GM10248 (cell line): ENCODE measurements at regions of chr1 and their contacts with region 1.

Region 1: GRCh38 chr1:40774266-40774998 is 9.2 kb upstream of the KCNQ4 start:
- DNase-seq: peak; percentile 68
- CTCF ChIP-seq: peak; percentile 84

Region 2: DNA sequence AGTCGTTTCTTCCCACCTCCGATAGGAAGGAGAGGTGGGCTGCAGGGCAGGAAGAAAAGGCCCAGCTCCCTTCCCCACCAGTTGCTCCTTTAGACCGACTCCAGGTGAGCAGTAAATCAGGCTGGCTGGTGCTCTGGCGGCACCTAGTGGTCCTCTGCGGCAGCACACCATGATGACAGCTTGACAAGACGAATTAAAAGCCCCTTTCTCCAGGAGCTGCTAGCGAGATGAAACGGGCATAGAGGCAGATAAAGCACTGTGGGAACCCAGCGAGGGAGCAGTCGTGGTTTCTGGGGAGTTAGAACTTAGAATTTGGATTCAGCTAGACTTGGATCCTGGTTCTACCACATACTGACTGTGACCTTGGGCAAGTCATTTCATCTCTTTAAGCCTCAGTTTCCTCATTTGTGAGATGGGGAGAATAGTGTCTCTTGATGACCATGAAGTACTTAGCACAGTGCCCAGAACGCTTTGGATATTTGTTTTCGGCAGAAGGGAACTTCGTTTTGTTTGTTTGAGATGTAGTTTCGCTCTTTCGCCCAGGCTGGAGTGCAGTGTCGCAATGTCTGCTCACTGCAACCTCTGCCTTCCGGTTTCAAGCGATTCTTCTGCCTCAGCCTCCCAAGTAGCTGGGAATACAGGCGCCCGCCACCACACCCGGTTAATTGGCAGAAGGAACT is 435.5 kb before region 1 on chr1:
- CTCF ChIA-PET with region 1: no interaction called
- POLR2A ChIA-PET with region 1: no interaction called
- DNase-seq: peak; percentile 84
- CTCF ChIP-seq: peak; percentile 97

Region 3: DNA sequence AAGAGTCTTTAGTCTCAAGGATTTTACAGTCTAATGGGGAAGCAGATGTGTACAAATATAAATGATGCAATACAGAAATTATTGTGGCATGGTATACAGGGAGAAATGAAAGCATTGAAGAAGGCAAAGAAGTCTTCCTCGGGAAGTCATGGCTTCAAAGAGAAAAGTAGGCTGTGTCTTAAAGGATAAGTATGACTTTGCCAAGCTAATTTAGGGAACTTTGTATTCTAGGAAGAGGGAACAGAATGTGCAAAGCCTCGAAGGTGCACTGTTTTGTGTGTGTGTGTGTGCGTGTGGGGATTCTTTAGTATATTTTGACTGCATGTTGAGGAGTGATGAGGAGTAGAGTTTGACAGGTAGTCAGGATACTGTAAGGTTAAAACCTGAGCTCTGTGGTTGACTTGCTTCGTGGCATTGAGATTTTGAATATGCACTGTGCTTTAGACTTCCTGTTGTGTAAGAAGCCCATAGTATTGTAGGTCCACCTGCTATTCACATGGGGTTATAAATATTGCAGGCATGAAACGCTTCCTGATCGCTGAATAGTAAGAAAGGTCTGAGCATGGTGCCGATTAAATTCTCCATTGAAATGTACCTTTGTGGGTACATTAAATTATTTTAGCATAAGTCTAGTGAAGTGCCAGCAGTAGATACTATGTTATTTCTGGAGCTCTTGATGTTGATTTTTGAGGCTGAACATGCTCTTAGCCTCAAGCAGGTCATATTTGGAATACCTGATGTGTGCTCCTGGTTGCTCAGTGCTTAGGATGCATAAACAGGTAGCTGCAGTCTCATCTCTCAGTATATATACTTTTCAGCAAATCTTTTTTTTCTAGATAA is 392.9 kb before region 1 on chr1:
- CTCF ChIA-PET with region 1: no interaction called
- POLR2A ChIA-PET with region 1: no interaction called
- DNase-seq: no peak
- CTCF ChIP-seq: no peak

Region 4: DNA sequence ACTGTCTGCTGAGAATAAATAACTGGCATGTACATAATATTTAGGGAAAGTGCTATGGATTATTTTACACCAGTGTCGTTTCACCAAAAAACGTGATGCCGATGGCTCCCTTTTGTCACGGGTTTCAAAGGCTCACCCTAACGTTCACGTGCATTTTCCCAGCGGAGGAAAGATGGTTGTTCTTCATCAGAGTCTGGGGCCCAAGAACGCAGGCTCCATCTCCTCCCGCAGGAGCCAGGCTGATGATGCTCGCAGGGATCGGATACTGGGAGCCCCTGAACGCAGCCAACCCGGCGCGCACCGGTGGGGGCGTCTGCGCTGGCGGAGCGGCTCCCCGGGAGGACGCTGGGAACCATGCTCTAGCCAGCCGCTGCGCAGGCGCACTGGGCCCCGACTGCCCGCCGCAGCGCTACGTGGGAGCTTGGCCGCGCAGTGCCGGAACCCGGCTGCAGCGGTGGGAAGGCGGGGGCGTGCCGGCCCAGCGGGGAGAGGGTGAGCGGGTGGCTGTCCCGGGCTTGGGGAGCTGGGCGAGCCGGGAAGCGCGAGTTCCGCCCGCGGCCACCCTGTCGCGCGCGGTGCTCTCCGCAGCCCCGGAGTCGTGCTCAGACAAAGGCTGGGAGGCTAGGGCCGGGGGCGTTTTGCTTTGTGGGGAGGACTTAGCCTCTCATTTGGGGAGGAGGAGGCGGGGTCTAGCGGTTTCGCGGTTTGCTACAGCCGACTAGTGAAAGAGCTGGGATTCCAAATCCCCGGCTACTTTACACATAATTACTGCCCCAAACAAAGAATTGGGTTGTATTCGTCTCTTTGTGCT is 324.5 kb before region 1 on chr1 and contains the start of gene ZFP69B:
- CTCF ChIA-PET with region 1: no interaction called
- POLR2A ChIA-PET with region 1: no interaction called
- DNase-seq: peak; percentile 97
- CTCF ChIP-seq: peak; percentile 10

Region 5: GRCh38 chr1:40691538-40692428 is 82.6 kb before region 1 on chr1 and contains the start of gene NFYC:
- CTCF ChIA-PET with region 1: interaction called, 17 read pairs
- POLR2A ChIA-PET with region 1: no interaction called
- DNase-seq: peak; percentile 95
- CTCF ChIP-seq: no peak

Region 6: DNA sequence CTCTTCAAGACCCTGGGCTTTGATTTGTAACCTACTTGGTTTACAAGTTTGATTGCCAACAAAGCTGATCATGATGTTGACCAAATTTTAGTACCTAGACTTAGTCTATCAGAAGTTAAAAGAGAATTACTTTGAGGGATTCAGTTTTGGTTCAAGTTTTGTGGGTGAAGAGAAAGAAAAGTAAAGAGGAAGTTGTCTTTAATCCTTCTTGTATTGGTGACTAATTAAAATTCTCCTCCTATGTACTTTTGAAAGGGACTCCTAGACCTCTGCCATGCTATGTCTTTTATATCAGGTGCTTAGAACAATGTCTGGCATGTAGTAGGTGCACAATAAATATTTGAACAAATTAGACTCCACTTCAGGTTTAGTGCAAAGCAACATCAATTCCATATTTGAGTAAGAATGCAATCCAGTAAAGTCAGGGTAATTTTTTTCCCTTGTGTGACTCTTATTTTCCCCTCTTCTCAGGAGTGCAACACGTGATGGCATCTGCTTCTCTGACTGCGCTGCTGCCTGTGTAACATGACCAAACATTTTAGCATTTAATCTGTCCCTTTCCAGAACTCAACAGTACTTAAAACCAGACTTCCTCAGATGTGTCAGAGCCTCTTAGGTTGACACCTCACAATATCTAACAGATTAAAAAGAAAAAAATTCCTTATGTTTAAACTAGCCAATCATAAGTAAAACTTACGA is 31.9 kb before region 1 on chr1:
- CTCF ChIA-PET with region 1: interaction called, 27 read pairs
- POLR2A ChIA-PET with region 1: no interaction called
- DNase-seq: no peak
- CTCF ChIP-seq: no peak

Region 7: DNA sequence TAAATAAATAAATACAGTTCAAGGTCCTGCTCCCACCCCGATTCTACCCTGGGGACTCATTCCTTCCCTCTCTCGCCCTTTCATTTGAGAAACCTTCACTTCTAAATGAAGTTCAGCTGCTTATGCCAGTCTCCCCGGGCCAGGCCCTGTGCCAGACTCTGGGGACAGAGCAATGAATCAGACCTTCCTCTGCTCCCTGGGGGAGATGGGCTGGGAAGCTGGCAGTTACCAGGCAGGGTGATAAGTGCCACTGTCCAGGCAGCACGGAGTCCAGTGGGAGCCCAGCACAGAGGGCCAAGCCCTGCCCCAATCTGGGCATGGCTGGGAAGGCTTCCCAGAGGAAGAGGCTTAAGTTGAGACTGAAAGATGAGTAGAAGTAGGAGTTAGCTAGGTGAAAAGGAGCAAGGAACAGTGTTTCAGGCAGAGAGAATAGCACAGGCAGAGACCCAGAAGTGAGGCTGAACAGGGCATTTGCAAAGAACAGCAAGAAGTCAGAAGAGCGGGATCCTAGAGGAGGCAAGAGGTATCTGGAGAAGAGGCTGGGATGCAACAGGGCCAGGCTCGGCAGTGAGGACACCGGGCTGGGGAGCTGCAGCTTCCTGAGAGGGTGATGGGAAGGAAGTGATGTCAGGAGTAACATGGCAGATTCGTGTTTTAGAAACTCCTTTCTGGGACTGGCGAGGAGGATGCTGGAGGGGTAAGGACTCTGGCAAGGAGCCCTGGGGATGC is 22.7 kb after region 1 on chr1:
- CTCF ChIA-PET with region 1: interaction called, 77 read pairs
- POLR2A ChIA-PET with region 1: no interaction called
- DNase-seq: no peak
- CTCF ChIP-seq: no peak

Region 8: DNA sequence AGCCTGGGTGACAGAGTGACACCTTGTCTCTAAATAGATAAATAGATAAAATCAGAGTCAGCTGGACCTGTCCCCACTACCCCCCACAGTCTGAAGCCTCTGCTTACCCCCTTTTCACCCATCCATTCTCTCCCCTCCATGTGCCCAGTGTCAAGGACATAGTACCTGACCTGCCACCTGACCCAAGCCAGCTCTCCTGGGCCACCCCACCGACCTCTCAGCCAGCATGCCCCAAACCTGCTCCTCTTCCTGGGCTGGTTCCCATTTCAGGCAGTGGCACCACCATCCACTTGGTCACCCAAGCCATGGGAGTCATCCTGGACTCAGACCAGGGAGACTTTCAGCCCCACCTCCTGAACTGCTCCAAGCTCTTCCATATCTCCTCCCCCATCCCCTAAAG is 59.5 kb after region 1 on chr1:
- CTCF ChIA-PET with region 1: interaction called, 15 read pairs
- POLR2A ChIA-PET with region 1: no interaction called
- DNase-seq: no peak
- CTCF ChIP-seq: no peak

Region 9: DNA sequence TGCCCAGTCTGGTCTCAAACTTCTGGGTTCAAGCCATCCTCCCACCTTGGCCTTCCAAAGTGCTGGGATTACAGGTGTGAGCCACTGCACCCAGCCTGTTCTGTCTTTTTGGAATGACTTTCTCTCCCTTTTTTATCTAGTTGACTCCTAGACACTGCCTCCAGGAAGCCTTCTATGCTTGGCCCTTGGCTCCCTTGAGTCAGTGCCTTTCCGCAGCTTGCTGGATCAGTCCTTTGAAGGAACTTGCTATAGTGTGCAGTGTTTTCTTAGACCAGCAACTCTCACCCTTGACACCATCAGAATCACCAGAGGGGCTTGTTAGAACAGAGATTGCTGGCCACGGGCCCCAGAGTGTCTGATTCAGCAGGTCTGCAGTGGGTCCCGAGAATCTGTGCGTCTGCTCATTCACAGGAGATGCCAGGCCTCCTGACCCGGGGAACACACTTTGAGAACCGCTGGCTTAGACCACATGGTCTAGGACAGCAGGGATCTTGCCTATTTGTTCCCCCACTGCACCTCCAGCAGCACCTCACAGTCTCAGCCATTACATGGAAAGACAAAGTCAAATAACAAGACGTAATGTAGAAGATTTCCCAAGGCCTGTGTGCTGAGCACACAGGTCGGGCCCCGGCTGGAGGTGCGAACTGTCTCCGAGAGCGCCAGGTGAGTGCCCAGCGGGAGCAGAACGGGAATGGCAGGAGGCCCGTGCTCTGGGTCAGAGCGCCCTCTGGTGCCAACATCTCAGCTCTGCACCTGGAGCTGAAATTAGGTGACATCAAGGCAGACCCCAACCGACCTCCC is 177.7 kb after region 1 on chr1:
- CTCF ChIA-PET with region 1: interaction called, 97 read pairs
- POLR2A ChIA-PET with region 1: no interaction called
- DNase-seq: peak; percentile 82
- CTCF ChIP-seq: peak; percentile 90